CD8-positive, alpha-beta memory T cell (primary cell): ENCODE measurements at regions of chr15 and their contacts with region 1.

Region 1: GRCh38 chr15:68875377-68876116 is 54.8 kb upstream of the SPESP1 start:
- DNase-seq: peak; percentile 72 to 92 (median 82)
- H3K4me3 ChIP-seq: no peak overlapping the region
- H3K4me3 Mint-ChIP-seq: peak overlapping the region in 4 of 7 donors; percentile 16 to 79 (median 28)
- H3K27ac ChIP-seq: no peak overlapping the region
- H3K27ac Mint-ChIP-seq: peak overlapping the region in 1 of 8 donors; percentile 31
- H3K4me1 ChIP-seq: no peaks in the 10 kb centered on the region
- H3K4me1 Mint-ChIP-seq: peaks cover 4 to 5% (median 4%) of the 10 kb centered on the region in 3 donors
- H3K27me3 ChIP-seq: peaks cover 8% of the 10 kb centered on the region
- H3K27me3 Mint-ChIP-seq: peaks cover 18 to 43% of the 10 kb centered on the region in 2 donors

Region 2: DNA sequence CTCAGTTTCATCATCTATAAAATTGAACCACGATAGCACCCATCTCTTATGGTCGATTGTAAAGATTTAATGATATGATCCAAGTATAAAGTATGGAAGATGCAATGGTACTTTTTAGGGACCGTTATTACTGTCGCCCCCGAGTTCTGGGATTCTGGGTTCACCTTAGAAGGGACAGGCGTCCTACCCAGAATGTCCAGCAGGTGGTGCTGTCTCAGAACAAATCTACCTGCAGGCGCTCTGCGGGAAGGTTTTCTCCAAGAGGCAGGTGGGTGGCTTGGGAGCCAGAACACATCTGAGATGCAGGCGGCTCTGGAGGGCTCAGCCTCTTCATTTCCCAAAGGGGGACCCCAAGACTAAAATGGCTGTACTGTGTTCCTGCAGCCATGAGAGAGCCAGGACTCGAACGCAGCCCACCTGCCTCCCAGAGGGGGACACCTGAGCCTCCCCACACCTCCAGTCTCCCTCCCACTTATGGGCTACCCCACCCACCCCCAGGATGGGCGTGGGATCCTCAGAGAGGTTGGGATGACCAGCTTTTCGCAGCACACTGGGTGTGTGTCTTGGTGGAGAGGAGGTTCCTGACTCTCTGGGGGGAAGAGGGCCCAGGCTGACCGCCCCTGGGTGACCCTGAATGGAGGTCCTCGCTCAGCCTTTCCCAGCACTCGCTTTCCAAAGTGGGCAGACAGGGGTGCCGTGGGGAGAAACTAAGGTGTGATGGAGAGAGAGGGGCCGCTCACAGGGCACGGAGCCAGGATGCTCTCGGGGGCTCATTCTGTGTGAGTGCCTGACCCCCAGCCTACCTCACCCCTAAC is 324.9 kb before region 1 on chr15:
- CTCF ChIA-PET with region 1: interaction called, 19 read pairs
- POLR2A ChIA-PET with region 1: no interaction called
- DNase-seq: peak; percentile 37 to 76 (median 57)
- H3K4me3 ChIP-seq: no peak overlapping the region
- H3K4me3 Mint-ChIP-seq: no peak overlapping the region
- H3K27ac ChIP-seq: no peak overlapping the region
- H3K27ac Mint-ChIP-seq: no peak overlapping the region
- H3K4me1 ChIP-seq: no peaks in the 10 kb centered on the region
- H3K4me1 Mint-ChIP-seq: no peaks in the 10 kb centered on the region
- H3K27me3 ChIP-seq: peaks cover 3% of the 10 kb centered on the region
- H3K27me3 Mint-ChIP-seq: peaks cover 28 to 53% of the 10 kb centered on the region in 2 donors

Region 3: GRCh38 chr15:68559345-68560310 is 315.9 kb before region 1 on chr15:
- CTCF ChIA-PET with region 1: interaction called, 42 read pairs
- POLR2A ChIA-PET with region 1: no interaction called
- DNase-seq: peak; percentile 47 to 71 (median 55)
- H3K4me3 ChIP-seq: peak overlapping the region; percentile 36
- H3K4me3 Mint-ChIP-seq: peak overlapping the region; percentile 67 to 91 (median 78)
- H3K27ac ChIP-seq: no peak overlapping the region
- H3K27ac Mint-ChIP-seq: no peak overlapping the region
- H3K4me1 ChIP-seq: peaks cover 11% of the 10 kb centered on the region
- H3K4me1 Mint-ChIP-seq: peaks cover 17 to 22% (median 22%) of the 10 kb centered on the region in 3 donors
- H3K27me3 ChIP-seq: peaks cover 10% of the 10 kb centered on the region
- H3K27me3 Mint-ChIP-seq: peaks cover 24 to 67% of the 10 kb centered on the region in 2 donors

Region 4: GRCh38 chr15:68730471-68730919 is 145.1 kb before region 1 on chr15:
- CTCF ChIA-PET with region 1: interaction called, 12 read pairs
- POLR2A ChIA-PET with region 1: no interaction called
- DNase-seq: peak in 3 of 5 donors; percentile 3 to 15 (median 9)
- H3K4me3 ChIP-seq: no peak overlapping the region
- H3K4me3 Mint-ChIP-seq: no peak overlapping the region
- H3K27ac ChIP-seq: no peak overlapping the region
- H3K27ac Mint-ChIP-seq: no peak overlapping the region
- H3K4me1 ChIP-seq: no peaks in the 10 kb centered on the region
- H3K4me1 Mint-ChIP-seq: peaks cover 0 to 5% (median 3%) of the 10 kb centered on the region in 3 donors
- H3K27me3 ChIP-seq: no peaks in the 10 kb centered on the region
- H3K27me3 Mint-ChIP-seq: peaks cover 0 to 4% of the 10 kb centered on the region in 2 donors

Region 5: GRCh38 chr15:68783226-68784058 is 92.1 kb before region 1 on chr15:
- CTCF ChIA-PET with region 1: interaction called, 44 read pairs
- POLR2A ChIA-PET with region 1: no interaction called
- DNase-seq: peak; percentile 52 to 75 (median 58)
- H3K4me3 ChIP-seq: no peak overlapping the region
- H3K4me3 Mint-ChIP-seq: no peak overlapping the region
- H3K27ac ChIP-seq: no peak overlapping the region
- H3K27ac Mint-ChIP-seq: peak overlapping the region in 7 of 8 donors; percentile 21 to 93 (median 77)
- H3K4me1 ChIP-seq: peaks cover 10% of the 10 kb centered on the region
- H3K4me1 Mint-ChIP-seq: peaks cover 23 to 34% (median 29%) of the 10 kb centered on the region in 3 donors
- H3K27me3 ChIP-seq: no peaks in the 10 kb centered on the region
- H3K27me3 Mint-ChIP-seq: no peaks in the 10 kb centered on the region

Region 6: DNA sequence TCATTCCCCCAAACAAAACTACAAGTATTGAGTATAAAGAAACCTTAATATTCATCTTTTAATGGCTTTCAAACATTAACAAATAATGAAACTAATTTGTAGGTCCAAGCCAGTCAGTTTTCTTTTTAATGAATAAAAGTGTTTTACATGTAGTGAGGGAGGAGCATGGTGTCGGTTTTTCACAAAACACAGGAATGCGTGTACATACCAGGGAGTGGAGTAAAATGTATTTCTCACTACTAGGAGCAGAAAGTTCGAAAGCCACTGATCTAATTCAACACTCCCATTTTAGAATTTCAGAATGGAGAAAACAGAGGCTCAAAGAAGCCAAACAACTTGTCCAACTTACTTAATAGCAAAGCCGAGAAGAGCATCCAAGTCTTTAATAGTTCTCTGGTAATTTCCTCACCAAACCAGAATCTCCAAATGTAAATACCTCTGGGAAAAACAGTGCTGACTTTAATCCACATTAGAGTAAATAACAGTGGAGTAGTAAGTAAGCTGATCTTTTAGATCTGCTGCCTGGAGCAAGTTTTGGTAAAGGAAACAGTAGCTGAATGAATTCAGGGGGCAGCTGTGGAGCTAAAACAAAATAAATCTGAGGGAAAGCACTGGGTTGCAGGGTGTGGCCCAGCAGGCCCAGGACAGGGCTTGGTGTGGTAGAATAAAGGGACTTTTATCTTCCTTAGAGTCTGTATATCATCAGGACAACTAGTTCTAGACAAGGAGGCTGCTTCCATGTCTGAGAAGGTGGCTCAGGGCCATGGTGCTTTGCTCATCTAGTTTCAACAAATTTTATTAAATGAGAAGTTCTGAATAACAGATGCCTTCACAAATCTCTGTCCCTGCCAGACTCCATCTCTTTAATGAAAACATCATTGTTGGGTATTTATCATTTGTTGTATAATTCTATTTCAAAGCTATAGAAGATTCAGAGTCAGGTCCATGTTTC is 62.7 kb before region 1 on chr15:
- CTCF ChIA-PET with region 1: interaction called, 5 read pairs
- POLR2A ChIA-PET with region 1: interaction called, 12 read pairs
- DNase-seq: no peak
- H3K4me3 ChIP-seq: no peak overlapping the region
- H3K4me3 Mint-ChIP-seq: peak overlapping the region in 3 of 7 donors; percentile 5 to 47 (median 28)
- H3K27ac ChIP-seq: no peak overlapping the region
- H3K27ac Mint-ChIP-seq: peak overlapping the region in 6 of 8 donors; percentile 13 to 88 (median 71)
- H3K4me1 ChIP-seq: peaks cover 75% of the 10 kb centered on the region
- H3K4me1 Mint-ChIP-seq: peaks cover 79 to 92% (median 91%) of the 10 kb centered on the region in 3 donors
- H3K27me3 ChIP-seq: no peaks in the 10 kb centered on the region
- H3K27me3 Mint-ChIP-seq: no peaks in the 10 kb centered on the region

Region 7: DNA sequence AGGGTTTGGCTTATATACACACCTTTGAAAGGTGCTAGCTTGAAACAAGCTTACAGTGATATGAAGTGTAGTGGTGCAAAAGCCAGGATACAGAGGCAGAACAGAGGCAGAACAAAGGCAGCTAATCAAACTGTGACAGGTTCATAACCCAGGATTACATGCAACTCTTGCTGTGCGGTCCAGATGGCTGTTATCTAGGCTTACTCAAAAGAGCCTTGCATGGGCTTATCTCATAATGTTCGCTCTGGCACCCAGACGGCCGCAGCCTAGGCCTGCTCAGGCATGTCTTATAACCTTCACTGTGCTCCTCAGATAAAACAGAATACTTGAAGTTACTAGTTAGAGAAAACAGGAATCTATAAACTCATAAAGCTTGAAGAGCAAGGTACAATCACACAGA is 116.2 kb after region 1 on chr15:
- CTCF ChIA-PET with region 1: no interaction called
- POLR2A ChIA-PET with region 1: no interaction called
- DNase-seq: no peak
- H3K4me3 ChIP-seq: no peak overlapping the region
- H3K4me3 Mint-ChIP-seq: no peak overlapping the region
- H3K27ac ChIP-seq: no peak overlapping the region
- H3K27ac Mint-ChIP-seq: no peak overlapping the region
- H3K4me1 ChIP-seq: no peaks in the 10 kb centered on the region
- H3K4me1 Mint-ChIP-seq: no peaks in the 10 kb centered on the region
- H3K27me3 ChIP-seq: no peaks in the 10 kb centered on the region
- H3K27me3 Mint-ChIP-seq: peaks cover 3 to 21% of the 10 kb centered on the region in 2 donors